CD4-positive, alpha-beta T cell (primary cell): ENCODE measurements at regions of chr4 and their contacts with region 1.

Region 1: DNA sequence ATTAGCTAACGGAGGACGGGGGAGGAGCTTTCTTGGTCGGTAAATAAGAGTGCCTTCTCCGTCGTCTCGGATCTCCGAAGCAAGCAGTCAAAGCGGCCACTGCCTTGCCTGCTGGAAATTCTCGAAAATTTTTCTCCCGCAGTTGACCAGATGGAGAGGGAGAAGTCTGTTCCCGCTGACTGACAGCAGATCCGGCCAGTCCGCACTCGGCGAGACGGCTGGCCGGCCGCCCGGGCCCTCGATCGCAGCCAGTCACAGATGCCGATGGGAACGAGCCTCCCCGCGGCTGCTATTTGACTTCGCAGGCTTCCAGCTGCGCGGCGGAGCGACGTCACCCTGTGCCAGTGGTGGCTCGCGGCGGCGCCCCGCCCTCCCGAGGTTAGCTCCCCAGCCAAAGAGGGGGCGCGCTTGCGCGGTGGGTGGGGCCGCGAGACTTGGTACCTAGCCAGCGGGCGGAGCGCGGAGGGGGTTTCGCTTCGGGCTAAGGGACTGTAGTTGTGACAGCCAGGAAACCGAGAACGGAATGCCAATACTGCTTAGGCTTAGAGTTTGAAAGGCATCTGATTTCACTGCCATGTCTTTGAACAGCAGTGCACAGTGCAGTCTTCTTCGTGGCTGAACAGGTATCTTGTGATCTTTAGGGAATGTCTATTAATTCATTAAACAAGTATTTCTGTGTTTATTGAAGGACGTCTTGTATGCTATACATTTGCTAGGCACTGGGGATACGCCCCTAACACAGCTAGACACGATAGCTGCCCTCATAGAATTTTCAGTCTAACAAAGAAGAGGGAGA is at the start of gene PPM1K:
- DNase-seq: peak; percentile 98 to 100 (median 99)
- ATAC-seq: peak; percentile 79
- H3K4me3 ChIP-seq: peak within 1 kb of the TSS; percentile 90
- H3K4me3 Mint-ChIP-seq: peak within 1 kb of the TSS; percentile 95
- H3K27ac ChIP-seq: peak within 1 kb of the TSS; percentile 98
- H3K27ac Mint-ChIP-seq: peak within 1 kb of the TSS; percentile 99
- H3K4me1 ChIP-seq: peaks cover 30% of the 10 kb centered on the region
- H3K4me1 Mint-ChIP-seq: peaks cover 45% of the 10 kb centered on the region
- H3K27me3 ChIP-seq: no peaks in the 10 kb centered on the region
- H3K27me3 Mint-ChIP-seq: no peaks in the 10 kb centered on the region
- CTCF ChIP-seq: peak; percentile 9
- total RNA-seq, gene PPM1K: 71.0 to 78.1 TPM

Region 2: GRCh38 chr4:86934771-86935565 is 1349.7 kb before region 1 on chr4 and contains the start of gene AFF1:
- CTCF ChIA-PET with region 1: no interaction called
- POLR2A ChIA-PET with region 1: interaction called, 12 read pairs
- intact Hi-C with region 1: no loop called
- DNase-seq: peak; percentile 73 to 98 (median 82)
- ATAC-seq: peak; percentile 65
- H3K4me3 ChIP-seq: peak within 1 kb of the TSS; percentile 93
- H3K4me3 Mint-ChIP-seq: peak within 1 kb of the TSS; percentile 96
- H3K27ac ChIP-seq: peak within 1 kb of the TSS; percentile 81
- H3K27ac Mint-ChIP-seq: peak within 1 kb of the TSS; percentile 94
- H3K4me1 ChIP-seq: peaks cover 30% of the 10 kb centered on the region
- H3K4me1 Mint-ChIP-seq: peaks cover 52% of the 10 kb centered on the region
- H3K27me3 ChIP-seq: no peaks in the 10 kb centered on the region
- H3K27me3 Mint-ChIP-seq: no peaks in the 10 kb centered on the region
- CTCF ChIP-seq: peak; percentile 47
- total RNA-seq, gene AFF1: 50.3 to 51.2 TPM

Region 3: GRCh38 chr4:88244816-88245579 is 39.6 kb before region 1 on chr4:
- CTCF ChIA-PET with region 1: no interaction called
- POLR2A ChIA-PET with region 1: interaction called, 18 read pairs
- intact Hi-C with region 1: no loop called
- DNase-seq: peak in 11 of 14 experiments; percentile 13 to 58 (median 38)
- ATAC-seq: peak; percentile 77
- H3K4me3 ChIP-seq: peak overlapping the region; percentile 22
- H3K4me3 Mint-ChIP-seq: peak overlapping the region; percentile 18
- H3K27ac ChIP-seq: no peak overlapping the region
- H3K27ac Mint-ChIP-seq: no peak overlapping the region
- H3K4me1 ChIP-seq: peaks cover 15% of the 10 kb centered on the region
- H3K4me1 Mint-ChIP-seq: peaks cover 13% of the 10 kb centered on the region
- H3K27me3 ChIP-seq: no peaks in the 10 kb centered on the region
- H3K27me3 Mint-ChIP-seq: no peaks in the 10 kb centered on the region
- CTCF ChIP-seq: no peak

Region 4: GRCh38 chr4:88308587-88308986 is 23.9 kb after region 1 on chr4:
- CTCF ChIA-PET with region 1: no interaction called
- POLR2A ChIA-PET with region 1: interaction called, 12 read pairs
- intact Hi-C with region 1: no loop called
- DNase-seq: no peak
- ATAC-seq: no peak
- H3K4me3 ChIP-seq: no peak overlapping the region
- H3K4me3 Mint-ChIP-seq: no peak overlapping the region
- H3K27ac ChIP-seq: no peak overlapping the region
- H3K27ac Mint-ChIP-seq: no peak overlapping the region
- H3K4me1 ChIP-seq: no peaks in the 10 kb centered on the region
- H3K4me1 Mint-ChIP-seq: no peaks in the 10 kb centered on the region
- H3K27me3 ChIP-seq: peaks cover 0 to 6% of the 10 kb centered on the region in 2 experiments
- H3K27me3 Mint-ChIP-seq: peaks cover 14% of the 10 kb centered on the region
- CTCF ChIP-seq: no peak

Region 5: GRCh38 chr4:88378691-88379559 is 94.3 kb after region 1 on chr4 and contains the start of gene HERC6:
- CTCF ChIA-PET with region 1: interaction called, 7 read pairs
- POLR2A ChIA-PET with region 1: interaction called, 85 read pairs
- intact Hi-C with region 1: loop called (anchors 2 kb)
- DNase-seq: peak; percentile 48 to 93 (median 59)
- ATAC-seq: peak; percentile 62
- H3K4me3 ChIP-seq: peak within 1 kb of the TSS; percentile 74
- H3K4me3 Mint-ChIP-seq: peak within 1 kb of the TSS; percentile 94
- H3K27ac ChIP-seq: peak within 1 kb of the TSS; percentile 47 to 89
- H3K27ac Mint-ChIP-seq: peak within 1 kb of the TSS; percentile 93
- H3K4me1 ChIP-seq: peaks cover 35% of the 10 kb centered on the region
- H3K4me1 Mint-ChIP-seq: peaks cover 48% of the 10 kb centered on the region
- H3K27me3 ChIP-seq: no peaks in the 10 kb centered on the region
- H3K27me3 Mint-ChIP-seq: no peaks in the 10 kb centered on the region
- CTCF ChIP-seq: peak; percentile 76
- total RNA-seq, gene HERC6: 9.5 to 10.6 TPM

Region 6: GRCh38 chr4:88523325-88524129 is 238.9 kb after region 1 on chr4 and contains the start of gene PYURF:
- CTCF ChIA-PET with region 1: interaction called, 3 read pairs
- POLR2A ChIA-PET with region 1: interaction called, 31 read pairs
- intact Hi-C with region 1: loop called in 1 of 2 experiments (anchors 5 kb)
- DNase-seq: peak; percentile 36 to 88 (median 69)
- ATAC-seq: peak; percentile 67
- H3K4me3 ChIP-seq: peak within 1 kb of the TSS; percentile 82
- H3K4me3 Mint-ChIP-seq: peak within 1 kb of the TSS; percentile 97
- H3K27ac ChIP-seq: peak within 1 kb of the TSS; percentile 42 to 59
- H3K27ac Mint-ChIP-seq: peak within 1 kb of the TSS; percentile 88
- H3K4me1 ChIP-seq: peaks cover 20% of the 10 kb centered on the region
- H3K4me1 Mint-ChIP-seq: peaks cover 58% of the 10 kb centered on the region
- H3K27me3 ChIP-seq: no peaks in the 10 kb centered on the region
- H3K27me3 Mint-ChIP-seq: no peaks in the 10 kb centered on the region
- CTCF ChIP-seq: no peak
- total RNA-seq, gene PYURF: 25.3 to 26.8 TPM

Region 7: DNA sequence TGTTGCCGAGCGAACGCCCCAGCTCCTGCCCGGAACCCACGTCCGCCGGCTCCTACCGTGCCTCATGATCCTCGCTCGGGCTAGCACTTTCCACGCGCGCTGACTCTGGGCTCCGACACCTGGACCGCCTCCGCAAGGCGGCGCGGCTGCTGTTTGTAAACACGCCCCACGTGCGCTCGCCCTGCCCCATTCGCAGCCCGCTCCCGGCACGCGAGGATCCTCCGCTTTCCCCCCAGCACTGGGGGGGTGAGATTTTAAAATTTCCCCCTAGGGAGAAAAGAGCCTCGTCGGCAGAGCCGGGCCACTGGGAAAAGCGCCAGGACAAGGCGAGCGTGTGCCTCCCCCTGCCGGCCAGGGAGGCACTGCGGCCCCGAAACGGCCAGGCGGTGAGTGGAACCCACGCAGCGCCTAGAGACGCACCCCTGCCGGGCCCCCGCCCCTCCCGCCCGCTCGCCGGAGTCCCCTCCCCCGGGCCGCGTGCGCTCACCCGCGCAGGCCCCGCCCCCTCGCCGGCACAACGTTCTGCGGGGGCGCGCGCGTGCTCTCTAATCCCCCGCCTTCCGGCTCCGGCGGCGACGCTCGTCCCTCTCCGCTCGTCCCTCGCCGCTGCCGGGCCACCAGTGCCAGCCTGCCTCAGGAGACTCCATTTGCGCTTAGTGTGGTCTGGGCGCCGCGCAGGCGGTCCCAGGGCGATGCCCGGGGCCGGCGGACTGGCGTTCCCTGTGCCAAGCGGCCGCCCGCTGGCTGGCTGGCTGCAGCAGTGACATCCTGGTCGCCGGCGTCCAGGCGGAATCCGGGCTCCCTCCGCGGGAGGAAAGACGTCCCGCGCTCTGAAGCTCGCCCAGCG is 826.6 kb after region 1 on chr4 and contains the start of gene TIGD2:
- CTCF ChIA-PET with region 1: no interaction called
- POLR2A ChIA-PET with region 1: interaction called, 3 read pairs
- intact Hi-C with region 1: loop called in 1 of 2 experiments (anchors 5 kb)
- DNase-seq: peak; percentile 78 to 97 (median 88)
- ATAC-seq: peak; percentile 91
- H3K4me3 ChIP-seq: peak within 1 kb of the TSS; percentile 67
- H3K4me3 Mint-ChIP-seq: peak within 1 kb of the TSS; percentile 90
- H3K27ac ChIP-seq: peak within 1 kb of the TSS; percentile 22 to 52
- H3K27ac Mint-ChIP-seq: peak within 1 kb of the TSS; percentile 77
- H3K4me1 ChIP-seq: peaks cover 18% of the 10 kb centered on the region
- H3K4me1 Mint-ChIP-seq: peaks cover 27% of the 10 kb centered on the region
- H3K27me3 ChIP-seq: no peaks in the 10 kb centered on the region
- H3K27me3 Mint-ChIP-seq: no peaks in the 10 kb centered on the region
- CTCF ChIP-seq: peak; percentile 98
- total RNA-seq, gene TIGD2: 3.3 to 3.9 TPM